Left ventricle myocardium inferior (tissue), 1 donor: ENCODE measurements at regions of chr14 and their contacts with region 1.

Region 1: GRCh38 chr14:88168498-88169165 is 154.4 kb downstream of the KCNK10 start:
- DNase-seq: no peak
- H3K4me3 ChIP-seq: no peak overlapping the region
- H3K27ac ChIP-seq: no peak overlapping the region
- H3K4me1 ChIP-seq: no peaks in the 10 kb centered on the region
- H3K27me3 ChIP-seq: peaks cover 39% of the 10 kb centered on the region
- CTCF ChIP-seq: peak; percentile 73

Region 2: DNA sequence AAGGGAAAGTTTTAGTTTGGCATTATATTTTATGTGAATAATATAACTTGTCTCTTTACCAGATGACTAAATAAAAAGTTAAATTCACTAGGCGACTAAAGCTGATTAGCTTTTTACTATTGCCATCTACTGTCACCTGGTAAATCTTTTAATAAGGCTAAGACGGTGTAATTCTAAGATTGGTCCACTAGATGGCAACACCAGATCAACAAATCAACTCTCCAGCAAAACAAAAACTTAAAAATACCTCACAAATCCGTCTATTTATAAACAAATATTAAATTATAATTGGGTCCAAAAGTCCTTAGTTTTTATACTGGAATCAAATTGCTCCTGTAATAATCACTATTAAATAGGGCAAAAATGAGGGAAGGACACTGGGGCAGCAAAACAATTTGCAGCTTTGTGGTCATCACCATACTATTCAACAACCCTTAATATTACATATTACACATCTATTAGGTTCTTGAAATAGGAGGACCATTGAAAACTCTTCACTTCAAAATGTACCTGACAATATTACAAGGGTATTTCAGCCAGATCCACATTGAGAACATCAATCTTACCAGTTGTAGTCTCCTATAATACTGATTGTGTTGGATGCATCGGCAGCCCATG is 223.5 kb before region 1 on chr14:
- intact Hi-C with region 1: loop called (anchors 10 kb)
- DNase-seq: no peak
- H3K4me3 ChIP-seq: no peak overlapping the region
- H3K27ac ChIP-seq: no peak overlapping the region
- H3K4me1 ChIP-seq: no peaks in the 10 kb centered on the region
- H3K27me3 ChIP-seq: no peaks in the 10 kb centered on the region
- CTCF ChIP-seq: peak; percentile 75

Region 3: GRCh38 chr14:88013750-88014349 is 154.8 kb before region 1 on chr14:
- intact Hi-C with region 1: loop called (anchors 10 kb)
- DNase-seq: peak; percentile 54
- H3K4me3 ChIP-seq: no peak overlapping the region
- H3K27ac ChIP-seq: no peak overlapping the region
- H3K4me1 ChIP-seq: no peaks in the 10 kb centered on the region
- H3K27me3 ChIP-seq: no peaks in the 10 kb centered on the region
- CTCF ChIP-seq: peak; percentile 95